GM18951 (cell line): ENCODE measurements at regions of chr3 and their contacts with region 1.

Region 1: DNA sequence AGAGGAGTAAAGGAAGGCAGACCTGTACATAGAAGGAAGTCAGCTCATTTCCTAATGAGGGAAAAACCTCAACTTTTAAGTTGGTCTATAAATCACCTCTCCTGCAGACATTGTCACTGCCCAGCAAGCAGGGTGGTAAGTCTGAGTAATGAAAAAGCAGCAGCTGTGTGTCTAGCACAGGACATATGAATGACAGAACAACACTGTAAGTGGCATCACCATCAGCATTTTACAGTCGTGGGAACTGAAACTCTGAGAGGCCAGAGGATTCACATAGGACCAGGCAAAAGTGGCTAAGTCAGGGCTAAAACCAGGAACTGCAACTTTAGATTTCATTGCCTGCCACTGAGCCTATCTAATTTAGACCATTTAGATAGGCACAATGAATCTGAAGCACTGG is 235.6 kb downstream of the CLSTN2 start:
- POLR2A ChIP-seq: no peak

Region 2: GRCh38 chr3:140296796-140297352 is 126.3 kb after region 1 on chr3:
- in situ Hi-C with region 1: no loop called
- POLR2A ChIP-seq: no peak

Region 3: DNA sequence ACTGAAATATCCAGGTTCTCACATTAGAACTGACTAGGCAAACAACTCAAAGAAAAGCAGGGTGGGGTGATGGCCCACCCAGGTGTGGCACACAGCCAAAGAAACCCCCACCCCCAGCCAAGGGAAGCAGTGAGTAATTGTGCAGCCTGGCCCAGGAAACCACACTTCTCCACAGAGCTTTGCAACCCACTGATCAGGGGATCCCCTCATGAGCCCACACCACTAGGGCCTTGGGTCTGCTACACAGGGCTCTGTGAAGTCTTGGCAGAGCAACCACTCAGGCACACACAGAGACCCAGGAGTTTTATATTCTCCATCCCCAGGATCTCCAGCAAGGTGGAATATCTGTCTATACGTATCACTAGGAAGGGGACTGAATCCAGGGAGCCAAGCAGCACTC is 485.1 kb after region 1 on chr3:
- in situ Hi-C with region 1: no loop called
- POLR2A ChIP-seq: no peak

Region 4: GRCh38 chr3:140736863-140737460 is 566.4 kb after region 1 on chr3:
- in situ Hi-C with region 1: loop called (anchors 25 kb)
- POLR2A ChIP-seq: no peak